ENCODE measurements at regions of chr17 and their contacts with region 1.

Region 1: GRCh38 chr17:63611354-63611753 is 10.7 kb downstream of the TACO1 start:
- H3K4me3 ChIP-seq: no peak overlapping the region
- H3K27ac ChIP-seq: 0 out of 2 replicates have a peak overlapping the region, but pooled peaks have one; percentile 16
- H3K4me1 ChIP-seq: no peaks in the 10 kb centered on the region
- CTCF ChIP-seq: no peak

Region 2: DNA sequence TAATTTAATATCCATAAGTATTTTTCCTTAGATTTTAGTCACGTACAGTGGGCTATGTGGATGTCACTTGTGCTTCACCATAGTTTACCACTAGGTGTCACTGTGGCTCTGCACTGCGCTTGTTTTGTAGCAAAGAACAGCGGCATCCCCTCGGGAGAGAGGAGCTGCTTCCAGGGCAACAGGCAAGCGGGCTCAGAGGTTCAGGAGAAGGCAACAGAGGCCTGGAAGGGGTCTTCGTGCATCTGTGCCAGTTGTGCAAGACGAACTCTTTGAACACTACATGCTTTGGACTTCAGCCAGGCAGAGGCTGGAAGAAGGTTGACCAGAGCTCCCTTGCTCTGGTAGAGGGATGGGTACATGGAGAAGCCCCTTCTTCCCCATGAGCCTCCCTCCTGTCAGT is 185.9 kb before region 1 on chr17:
- CTCF ChIA-PET with region 1: interaction called, 106 read pairs
- POLR2A ChIA-PET with region 1: interaction called, 5 read pairs
- H3K4me3 ChIP-seq: no peak overlapping the region
- H3K27ac ChIP-seq: no peak overlapping the region
- H3K4me1 ChIP-seq: no peaks in the 10 kb centered on the region
- CTCF ChIP-seq: peak; percentile 75

Region 3: DNA sequence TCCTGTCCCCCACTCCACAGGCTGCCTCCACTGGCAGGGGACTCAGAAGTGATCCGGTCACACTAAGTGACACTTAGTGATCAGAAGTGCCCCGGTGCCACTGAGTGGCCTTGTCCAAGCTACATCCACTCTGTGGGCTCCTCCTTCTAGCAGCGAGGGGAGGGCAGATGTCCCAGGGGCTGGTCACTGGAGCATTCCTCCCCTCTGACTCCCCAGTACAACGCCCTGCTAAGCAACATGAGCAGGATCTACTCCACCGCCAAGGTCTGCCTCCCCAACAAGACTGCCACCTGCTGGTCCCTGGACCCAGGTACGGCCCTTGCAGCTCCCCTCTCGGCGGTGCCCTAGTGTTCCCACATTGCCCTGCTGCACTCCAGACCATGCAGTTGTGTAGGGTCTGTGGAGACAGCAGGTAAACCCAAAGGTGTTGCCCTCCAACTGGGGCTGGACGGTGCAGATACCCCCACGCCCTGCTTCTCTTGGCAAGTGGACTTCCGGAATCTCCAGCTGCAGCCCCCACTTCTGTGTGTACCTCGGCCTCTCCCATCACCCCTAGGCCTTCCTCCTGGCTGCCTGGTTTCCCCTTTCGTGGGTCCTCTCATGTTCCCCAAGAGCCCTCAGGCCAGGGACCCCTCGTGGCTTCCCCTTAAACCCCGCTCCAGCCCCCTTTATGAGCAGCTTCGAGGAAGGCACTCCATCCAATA is 132.4 kb before region 1 on chr17:
- CTCF ChIA-PET with region 1: interaction called, 10 read pairs
- POLR2A ChIA-PET with region 1: no interaction called
- H3K4me3 ChIP-seq: no peak overlapping the region
- H3K27ac ChIP-seq: no peak overlapping the region
- H3K4me1 ChIP-seq: peaks cover 12% of the 10 kb centered on the region
- CTCF ChIP-seq: peak; percentile 95

Region 4: DNA sequence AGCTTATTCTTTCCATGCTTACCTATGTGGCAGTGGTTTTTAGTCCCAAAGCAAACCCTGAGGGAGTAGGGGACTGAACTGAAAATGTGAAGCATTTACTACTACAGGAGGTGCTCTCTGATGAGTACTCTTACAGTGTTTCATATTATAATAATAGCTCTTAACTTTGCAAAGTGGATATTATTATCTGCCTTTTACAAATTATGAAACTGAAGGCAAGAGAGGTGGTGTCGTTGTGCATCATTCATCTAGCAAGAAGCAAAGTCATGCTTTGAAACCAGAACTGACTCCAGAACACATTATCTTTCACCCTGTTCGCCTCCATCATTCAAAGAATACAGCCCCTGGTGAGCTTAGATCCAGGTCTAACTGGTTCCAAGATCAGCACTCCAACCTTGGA is 96.4 kb before region 1 on chr17:
- CTCF ChIA-PET with region 1: no interaction called
- POLR2A ChIA-PET with region 1: no interaction called
- H3K4me3 ChIP-seq: no peak overlapping the region
- H3K27ac ChIP-seq: no peak overlapping the region
- H3K4me1 ChIP-seq: no peaks in the 10 kb centered on the region
- CTCF ChIP-seq: no peak

Region 5: DNA sequence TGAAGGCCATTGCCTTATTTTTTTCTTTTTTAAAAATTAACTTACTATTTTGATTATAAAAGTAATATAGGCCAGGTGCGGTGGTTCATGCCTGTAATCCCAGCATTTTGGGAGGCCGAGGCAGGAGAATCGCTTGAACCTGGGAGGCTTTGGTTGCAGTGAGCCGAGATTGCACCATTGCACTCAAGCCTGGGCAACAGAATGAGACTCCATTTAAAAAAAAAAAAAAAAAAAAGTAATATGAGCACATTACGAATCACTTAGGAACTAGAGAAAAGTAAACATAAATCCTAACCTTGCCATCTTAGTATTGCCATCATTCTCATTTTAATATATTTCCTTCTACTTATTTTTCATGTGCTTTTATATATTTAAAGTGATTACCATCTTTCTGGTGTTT is 23.6 kb before region 1 on chr17:
- CTCF ChIA-PET with region 1: interaction called, 11 read pairs
- POLR2A ChIA-PET with region 1: no interaction called
- H3K4me3 ChIP-seq: no peak overlapping the region
- H3K27ac ChIP-seq: no peak overlapping the region
- H3K4me1 ChIP-seq: no peaks in the 10 kb centered on the region
- CTCF ChIP-seq: no peak

Region 6: DNA sequence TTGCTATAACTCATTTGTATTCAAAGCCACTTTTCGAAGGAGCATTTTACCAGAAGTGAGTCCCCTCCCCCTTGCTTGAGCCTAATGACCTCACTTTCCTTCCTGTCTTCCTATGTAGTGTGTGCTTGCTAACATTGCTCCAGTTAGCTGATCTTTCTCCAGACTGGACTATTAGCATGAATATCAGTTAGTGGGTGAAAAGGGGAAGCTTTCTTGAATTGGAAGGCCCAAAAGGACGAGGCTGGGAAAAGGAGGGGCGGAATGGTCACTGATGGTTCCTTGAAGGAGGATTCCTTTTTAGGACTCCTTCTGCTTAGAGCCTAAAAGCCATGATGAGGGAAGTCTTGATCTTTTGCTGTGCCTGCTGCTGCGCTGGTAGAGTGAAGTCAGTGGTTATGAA is 22.8 kb after region 1 on chr17:
- CTCF ChIA-PET with region 1: interaction called, 12 read pairs
- POLR2A ChIA-PET with region 1: no interaction called
- H3K4me3 ChIP-seq: no peak overlapping the region
- H3K27ac ChIP-seq: no peak overlapping the region
- H3K4me1 ChIP-seq: peaks cover 3% of the 10 kb centered on the region
- CTCF ChIP-seq: no peak

Measured in HEK293 (cell line).